ENCODE measurements at regions of chr3 and their contacts with region 1.

Region 1: DNA sequence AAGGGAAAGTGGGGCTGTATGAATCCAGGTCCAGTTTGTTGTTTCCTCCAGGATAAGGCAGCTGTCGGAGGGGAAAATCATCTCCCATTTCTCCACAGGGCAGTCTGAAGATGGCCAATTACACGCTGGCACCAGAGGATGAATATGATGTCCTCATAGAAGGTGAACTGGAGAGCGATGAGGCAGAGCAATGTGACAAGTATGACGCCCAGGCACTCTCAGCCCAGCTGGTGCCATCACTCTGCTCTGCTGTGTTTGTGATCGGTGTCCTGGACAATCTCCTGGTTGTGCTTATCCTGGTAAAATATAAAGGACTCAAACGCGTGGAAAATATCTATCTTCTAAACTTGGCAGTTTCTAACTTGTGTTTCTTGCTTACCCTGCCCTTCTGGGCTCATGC is 911 bp downstream of the CCRL2 start:
- DNase-seq: no peak
- H3K4me3 ChIP-seq: peak overlapping the region; percentile 4 to 50 (median 22)
- H3K27ac ChIP-seq: peak overlapping the region in 1 of 2 donors; percentile 44
- H3K4me1 ChIP-seq: no peaks in the 10 kb centered on the region
- H3K27me3 ChIP-seq: peaks cover 0 to 7% of the 10 kb centered on the region in 2 donors
- CTCF ChIP-seq: no peak
- POLR2A ChIP-seq: no peak

Region 2: DNA sequence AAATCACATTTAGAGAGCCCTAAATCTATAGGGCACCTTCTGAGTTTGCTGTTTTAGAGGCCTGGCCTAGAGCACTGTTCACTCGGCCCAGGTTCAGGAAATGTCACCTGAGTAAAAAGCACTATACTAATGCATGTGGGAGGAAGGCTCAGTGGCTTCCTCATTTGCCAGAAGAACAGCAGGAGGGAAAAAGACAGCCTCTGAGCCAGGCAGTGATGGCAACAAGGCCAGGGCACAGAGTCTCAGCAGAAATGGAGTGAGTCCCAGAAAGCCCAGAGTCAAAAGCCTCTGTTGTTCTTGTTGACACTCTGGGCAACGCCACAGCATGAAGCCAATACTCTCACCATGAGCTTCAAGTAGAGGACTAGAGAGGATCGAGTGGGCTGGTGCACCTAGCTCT is 30.9 kb after region 1 on chr3:
- intact Hi-C with region 1: loop called (anchors 1 kb)
- DNase-seq: no peak
- H3K4me3 ChIP-seq: no peak overlapping the region
- H3K27ac ChIP-seq: no peak overlapping the region
- H3K4me1 ChIP-seq: no peaks in the 10 kb centered on the region
- H3K27me3 ChIP-seq: no peaks in the 10 kb centered on the region
- CTCF ChIP-seq: no peak
- POLR2A ChIP-seq: no peak

Region 3: DNA sequence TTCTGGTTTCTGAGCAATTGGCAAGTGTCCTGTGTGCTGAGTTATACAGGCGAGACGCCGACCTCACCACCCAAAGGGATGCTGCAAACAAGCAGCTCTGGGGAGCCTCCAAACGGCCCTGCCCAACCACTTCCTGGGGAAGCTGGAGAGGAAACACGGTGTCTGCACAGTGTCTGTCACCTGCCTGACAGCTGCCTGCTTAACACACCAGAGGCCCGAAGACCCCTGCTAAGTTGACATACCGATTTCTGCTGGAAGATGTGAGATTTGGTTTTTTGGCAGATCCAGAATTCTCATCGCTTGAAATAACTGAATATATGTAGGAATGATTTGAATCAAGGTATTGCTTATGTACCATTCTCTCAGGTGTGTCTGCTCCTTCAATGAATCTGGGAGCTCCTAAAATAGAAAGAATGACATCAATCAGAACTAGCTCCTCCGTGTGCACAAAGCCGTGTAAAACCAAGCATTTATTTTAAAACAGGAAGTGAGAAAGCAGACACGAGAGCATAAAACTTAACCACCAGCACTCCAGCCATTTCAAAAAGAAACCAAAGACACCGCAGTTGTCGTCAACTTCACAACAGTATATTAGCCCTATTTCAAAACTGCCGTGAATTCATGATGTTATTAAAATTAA is 131.0 kb after region 1 on chr3:
- intact Hi-C with region 1: no loop called
- DNase-seq: peak in 1 of 2 donors; percentile 34
- H3K4me3 ChIP-seq: no peak overlapping the region
- H3K27ac ChIP-seq: no peak overlapping the region
- H3K4me1 ChIP-seq: no peaks in the 10 kb centered on the region
- H3K27me3 ChIP-seq: no peaks in the 10 kb centered on the region
- CTCF ChIP-seq: no peak
- POLR2A ChIP-seq: no peak

Measured in breast epithelium (tissue), 4 donors.